ENCODE measurements at regions of chrX and their contacts with region 1.

Region 1: DNA sequence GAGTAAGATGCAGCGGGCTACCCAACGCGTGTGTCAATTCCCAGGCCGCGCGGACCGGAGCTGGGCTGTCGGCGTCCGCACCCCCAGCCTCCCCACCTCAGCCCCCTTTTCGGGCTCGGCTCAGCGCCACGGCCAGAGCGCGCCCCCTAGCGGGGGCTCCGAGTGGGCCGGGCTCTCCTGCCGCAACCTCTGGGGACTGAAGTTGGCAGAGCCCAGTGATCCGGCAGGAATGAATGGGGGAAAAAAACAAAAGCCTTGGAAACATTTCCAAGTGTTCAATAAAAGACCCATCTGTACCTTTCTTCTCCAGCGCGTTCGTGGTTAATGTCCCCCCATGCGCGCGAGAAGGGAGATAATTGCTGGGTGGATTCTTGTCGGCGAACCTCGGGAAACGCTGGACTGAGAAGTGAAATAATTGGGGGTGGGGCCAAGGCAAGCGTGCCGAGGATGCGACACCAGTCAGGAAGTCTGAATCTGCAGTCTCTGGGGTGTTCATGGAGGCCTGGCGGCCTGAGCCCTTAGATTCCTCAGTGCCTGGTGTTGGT is 5.2 kb upstream of the ARX start:
- DNase-seq: peak; percentile 25
- H3K4me3 ChIP-seq: peak overlapping the region; percentile 19
- H3K27ac ChIP-seq: no peak overlapping the region
- H3K4me1 ChIP-seq: no peaks in the 10 kb centered on the region
- CTCF ChIP-seq: peak; percentile 75

Region 2: DNA sequence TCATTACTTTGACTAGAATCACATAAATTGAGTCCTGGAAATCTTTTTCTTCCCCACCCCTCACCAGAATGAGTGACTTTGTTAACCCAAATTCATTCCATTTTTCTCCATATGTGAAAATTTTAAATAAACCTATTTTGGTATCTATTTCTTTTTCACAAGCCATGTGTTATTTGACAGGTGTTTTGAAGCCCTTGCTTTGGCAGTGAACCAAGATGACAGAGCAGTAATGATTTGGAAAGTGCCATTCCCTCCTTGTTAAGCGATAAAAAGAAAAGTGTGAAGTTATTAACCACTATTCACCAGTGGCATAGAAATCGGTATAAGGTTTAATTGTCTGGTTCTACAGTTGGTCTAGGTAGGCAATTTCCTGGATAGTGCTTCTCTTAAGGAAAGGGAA is 261.2 kb before region 1 on chrX:
- CTCF ChIA-PET with region 1: no interaction called
- POLR2A ChIA-PET with region 1: no interaction called
- intact Hi-C with region 1: loop called (anchors 5 kb)
- DNase-seq: no peak
- H3K4me3 ChIP-seq: no peak overlapping the region
- H3K27ac ChIP-seq: no peak overlapping the region
- H3K4me1 ChIP-seq: no peaks in the 10 kb centered on the region
- CTCF ChIP-seq: no peak

Region 3: DNA sequence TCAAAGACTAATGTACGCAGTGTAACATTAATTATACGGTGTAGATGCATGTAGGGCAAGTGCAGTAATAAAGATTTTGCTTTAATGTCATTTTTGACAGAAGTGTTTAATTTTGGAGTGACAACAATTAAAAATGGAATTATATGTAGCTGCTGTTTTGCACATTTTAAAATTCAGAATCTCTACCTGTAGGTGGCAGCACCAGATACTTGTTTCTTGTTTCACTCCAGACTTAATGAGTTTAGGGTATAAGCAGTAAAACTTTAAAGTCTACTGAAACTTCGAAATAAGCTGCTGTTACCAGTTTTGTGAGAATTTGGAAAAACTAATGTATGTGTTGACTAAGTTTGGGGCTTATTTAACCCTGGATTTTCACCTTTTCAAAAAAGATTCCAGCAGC is 182.3 kb before region 1 on chrX:
- CTCF ChIA-PET with region 1: interaction called, 3 read pairs
- POLR2A ChIA-PET with region 1: interaction called, 3 read pairs
- intact Hi-C with region 1: loop called (anchors 2 kb)
- DNase-seq: peak; percentile 35
- H3K4me3 ChIP-seq: no peak overlapping the region
- H3K27ac ChIP-seq: peak overlapping the region; percentile 35
- H3K4me1 ChIP-seq: peaks cover 16% of the 10 kb centered on the region
- CTCF ChIP-seq: peak; percentile 79

Region 4: GRCh38 chrX:25640276-25640675 is 619.3 kb after region 1 on chrX:
- CTCF ChIA-PET with region 1: no interaction called
- POLR2A ChIA-PET with region 1: no interaction called
- intact Hi-C with region 1: no loop called
- DNase-seq: no peak
- H3K4me3 ChIP-seq: no peak overlapping the region
- H3K27ac ChIP-seq: no peak overlapping the region
- H3K4me1 ChIP-seq: no peaks in the 10 kb centered on the region
- CTCF ChIP-seq: no peak

Measured in OCI-LY7 (cell line).